PC-9 (cell line): ENCODE measurements at regions of chr3 and their contacts with region 1.

Region 1: DNA sequence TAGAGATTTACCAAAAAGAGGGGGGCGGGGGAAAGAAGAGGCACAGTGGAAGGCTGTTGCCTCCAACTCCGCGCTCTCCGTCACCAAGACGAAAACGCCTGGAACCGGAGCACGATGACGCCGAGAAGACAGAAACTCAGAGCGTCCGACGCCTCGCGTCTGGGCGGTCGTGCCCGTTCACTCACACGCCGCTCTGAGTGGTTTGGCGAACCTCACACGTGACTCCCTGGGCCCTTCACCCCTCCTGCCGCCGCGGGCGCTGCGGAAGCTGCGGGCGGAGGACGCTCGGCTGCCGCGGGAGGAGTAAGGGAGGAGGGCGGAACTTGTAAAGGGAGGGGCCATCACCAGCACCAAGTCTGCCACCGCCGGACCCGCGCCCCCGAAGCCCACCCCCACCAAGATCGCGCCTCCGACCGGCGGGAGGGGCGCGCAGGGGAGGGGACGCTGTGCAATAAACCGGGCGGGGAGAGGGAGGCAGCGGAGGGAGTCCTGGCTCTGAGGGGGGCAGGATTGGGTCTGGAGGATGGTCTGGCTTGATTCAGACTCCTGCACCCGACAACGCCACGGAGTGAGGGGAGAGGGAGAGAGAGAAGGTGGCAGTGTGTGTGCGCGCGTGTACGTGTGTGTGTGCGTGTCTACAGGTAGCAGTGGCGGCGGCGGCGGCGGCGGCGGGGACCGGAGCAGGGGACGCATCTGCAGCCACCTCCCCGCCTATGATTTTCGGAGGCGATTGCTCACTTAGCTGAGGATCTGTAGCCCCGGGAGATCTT is 1.9 kb upstream of the NLGN1 start:
- DNase-seq: peak; percentile 70 to 89
- H3K4me3 ChIP-seq: peak overlapping the region; percentile 56
- H3K27ac ChIP-seq: peak overlapping the region; percentile 57
- H3K4me1 ChIP-seq: peaks cover 30% of the 10 kb centered on the region
- H3K27me3 ChIP-seq: peaks cover 44% of the 10 kb centered on the region
- CTCF ChIP-seq: no peak

Region 2: DNA sequence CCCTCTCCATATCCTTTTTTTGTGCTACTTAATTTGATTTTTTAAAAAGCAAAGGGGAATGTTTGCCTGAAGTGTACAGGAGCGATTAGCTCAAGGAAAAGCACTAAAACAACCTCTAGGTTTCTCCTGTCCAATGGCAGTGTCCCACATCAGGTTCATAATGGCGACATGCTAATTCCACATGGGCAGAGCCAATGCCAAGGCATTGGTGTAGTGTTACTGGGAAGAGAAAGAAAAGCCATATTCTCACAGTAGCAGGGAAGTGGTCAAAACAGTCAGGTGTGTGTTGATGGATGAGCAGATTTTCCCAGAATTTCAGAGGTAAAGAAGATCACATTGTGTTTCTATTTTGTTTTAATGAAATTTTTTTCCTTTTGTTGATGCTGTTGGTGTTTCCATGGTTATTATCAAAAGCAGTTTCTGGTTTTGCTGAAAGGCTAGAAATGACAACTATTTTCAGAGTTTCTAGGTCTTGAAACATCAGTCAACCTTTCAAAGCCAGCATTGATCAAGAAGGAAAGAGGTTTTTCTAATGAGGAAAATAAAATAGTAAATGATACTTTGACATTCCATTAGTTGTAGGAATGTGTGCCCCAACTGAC is 1291.0 kb before region 1 on chr3:
- CTCF ChIA-PET with region 1: no interaction called
- POLR2A ChIA-PET with region 1: interaction called, 19 read pairs
- intact Hi-C with region 1: no loop called
- DNase-seq: no peak
- H3K4me3 ChIP-seq: no peak overlapping the region
- H3K27ac ChIP-seq: no peak overlapping the region
- H3K4me1 ChIP-seq: peaks cover 45% of the 10 kb centered on the region
- H3K27me3 ChIP-seq: no peaks in the 10 kb centered on the region
- CTCF ChIP-seq: no peak

Region 3: DNA sequence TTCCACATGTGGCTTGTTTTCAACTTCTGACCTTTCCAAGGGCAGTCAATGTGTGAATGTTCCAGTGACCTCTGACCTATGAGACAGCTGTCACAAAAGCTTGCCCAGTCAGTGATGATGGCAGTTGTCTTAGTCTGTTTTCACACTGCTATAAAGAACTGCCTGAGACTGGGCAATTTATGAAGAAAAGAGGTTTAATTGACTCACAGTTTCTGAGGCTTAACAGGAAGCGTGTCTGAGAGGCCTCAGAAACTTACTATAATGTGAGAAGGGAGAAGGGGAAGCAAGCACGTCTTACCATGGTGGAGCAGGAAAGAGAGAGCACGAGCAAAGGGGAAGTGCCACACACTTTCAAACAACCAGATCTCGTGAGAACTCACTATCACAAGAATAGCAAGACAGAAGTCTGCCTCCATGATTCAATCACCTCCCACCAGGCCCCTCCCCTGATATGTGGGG is 549.5 kb before region 1 on chr3:
- CTCF ChIA-PET with region 1: no interaction called
- POLR2A ChIA-PET with region 1: no interaction called
- intact Hi-C with region 1: loop called (anchors 10 kb)
- DNase-seq: no peak
- H3K4me3 ChIP-seq: no peak overlapping the region
- H3K27ac ChIP-seq: no peak overlapping the region
- H3K4me1 ChIP-seq: 0 out of 2 replicates have a peak, but pooled peaks cover 5% of the 10 kb centered on the region
- H3K27me3 ChIP-seq: no peaks in the 10 kb centered on the region
- CTCF ChIP-seq: no peak

Region 4: DNA sequence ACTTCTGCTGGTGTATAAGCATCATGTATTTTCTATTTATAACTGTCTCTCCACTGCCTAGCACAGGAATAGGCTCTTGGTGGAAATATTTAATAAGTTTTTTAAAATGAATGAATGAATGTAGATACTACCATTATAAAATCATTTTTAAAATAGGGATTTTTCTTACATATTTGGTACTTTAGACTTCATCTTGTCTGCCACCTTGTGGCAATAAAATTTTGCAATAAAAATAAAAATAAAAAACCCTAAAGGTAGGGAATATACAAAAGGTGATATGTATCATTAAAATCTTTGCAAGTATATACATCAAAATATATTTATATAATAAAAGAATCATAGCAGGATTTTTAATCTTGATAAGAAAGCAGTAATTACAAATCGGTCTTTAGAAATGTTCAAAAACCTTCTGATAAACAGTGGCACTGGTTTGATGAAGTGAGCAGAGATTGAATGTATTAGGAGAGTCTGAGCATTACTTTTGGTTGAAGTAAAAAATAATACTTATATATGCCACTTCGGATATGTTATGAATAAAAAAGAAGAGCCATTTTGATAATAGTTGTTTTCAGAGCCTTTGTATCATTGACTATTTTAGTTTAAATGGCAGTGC is 349.7 kb before region 1 on chr3:
- CTCF ChIA-PET with region 1: no interaction called
- POLR2A ChIA-PET with region 1: interaction called, 22 read pairs
- intact Hi-C with region 1: no loop called
- DNase-seq: no peak
- H3K4me3 ChIP-seq: no peak overlapping the region
- H3K27ac ChIP-seq: no peak overlapping the region
- H3K4me1 ChIP-seq: no peaks in the 10 kb centered on the region
- H3K27me3 ChIP-seq: no peaks in the 10 kb centered on the region
- CTCF ChIP-seq: peak; percentile 84

Region 5: DNA sequence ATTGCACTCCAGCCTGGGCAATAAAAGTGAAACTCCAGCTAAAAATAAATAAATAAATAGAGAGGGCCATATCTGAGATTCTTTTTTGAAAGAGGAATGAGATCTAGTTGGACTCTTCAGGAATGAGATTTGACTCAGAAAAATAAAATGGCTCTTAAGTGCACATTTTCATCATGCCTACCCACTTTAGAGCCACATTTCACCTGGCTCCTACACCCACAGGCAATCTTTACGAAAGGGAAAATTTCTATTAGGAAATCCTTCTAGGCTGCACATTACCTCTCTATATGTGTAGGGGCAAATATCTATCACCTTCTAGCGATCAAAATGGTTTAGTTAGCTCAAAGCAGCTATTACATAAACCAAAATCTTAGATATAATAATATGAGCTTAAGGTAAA is 14.9 kb before region 1 on chr3:
- CTCF ChIA-PET with region 1: interaction called, 3 read pairs
- POLR2A ChIA-PET with region 1: interaction called, 10 read pairs
- intact Hi-C with region 1: no loop called
- DNase-seq: no peak
- H3K4me3 ChIP-seq: no peak overlapping the region
- H3K27ac ChIP-seq: no peak overlapping the region
- H3K4me1 ChIP-seq: no peaks in the 10 kb centered on the region
- H3K27me3 ChIP-seq: no peaks in the 10 kb centered on the region
- CTCF ChIP-seq: no peak

Region 6: GRCh38 chr3:173553635-173554280 is 158.2 kb after region 1 on chr3:
- CTCF ChIA-PET with region 1: no interaction called
- POLR2A ChIA-PET with region 1: no interaction called
- intact Hi-C with region 1: no loop called
- DNase-seq: peak in 1 of 2 experiments; percentile 4
- H3K4me3 ChIP-seq: no peak overlapping the region
- H3K27ac ChIP-seq: no peak overlapping the region
- H3K4me1 ChIP-seq: no peaks in the 10 kb centered on the region
- H3K27me3 ChIP-seq: no peaks in the 10 kb centered on the region
- CTCF ChIP-seq: peak; percentile 77

Region 7: GRCh38 chr3:174125267-174125824 is 729.7 kb after region 1 on chr3:
- CTCF ChIA-PET with region 1: no interaction called
- POLR2A ChIA-PET with region 1: no interaction called
- intact Hi-C with region 1: loop called (anchors 10 kb)
- DNase-seq: peak in 1 of 2 experiments; percentile 8
- H3K4me3 ChIP-seq: no peak overlapping the region
- H3K27ac ChIP-seq: no peak overlapping the region
- H3K4me1 ChIP-seq: peaks cover 13% of the 10 kb centered on the region
- H3K27me3 ChIP-seq: no peaks in the 10 kb centered on the region
- CTCF ChIP-seq: peak; percentile 55; the same call in 1 of the 2 replicates